Panc1 (cell line): ENCODE measurements at regions of chr5 and their contacts with region 1.

Region 1: DNA sequence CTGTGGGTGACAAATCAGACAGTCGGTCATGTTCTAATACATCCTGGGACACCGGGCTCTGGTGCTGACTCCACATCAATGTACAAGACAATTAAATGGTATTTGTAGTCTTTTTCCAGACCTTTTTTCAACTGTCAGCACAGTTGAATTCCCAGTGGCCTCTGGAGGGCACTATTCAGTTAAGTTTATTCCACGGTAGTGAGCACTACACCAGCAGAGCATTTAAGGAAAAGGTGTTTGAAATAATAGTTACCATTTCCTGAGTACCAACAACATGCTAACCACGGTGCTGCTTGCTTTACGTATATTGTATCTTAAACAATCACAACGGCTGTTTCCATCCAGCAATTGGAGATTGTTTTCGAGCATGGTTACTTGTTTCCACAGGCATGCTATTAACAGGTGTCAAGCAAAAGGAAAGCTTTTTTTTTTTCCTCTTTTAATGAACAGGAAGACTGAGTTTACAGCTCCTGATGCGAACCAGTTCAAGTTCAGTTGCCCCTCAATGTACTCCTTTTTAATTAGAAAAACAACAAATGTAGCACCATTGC is 186.7 kb downstream of the PDZD2 start:
- DNase-seq: peak; percentile 58
- ATAC-seq: peak; percentile 95
- H3K4me3 ChIP-seq: no peak overlapping the region
- H3K27ac ChIP-seq: no peak overlapping the region
- H3K4me1 ChIP-seq: no peaks in the 10 kb centered on the region
- H3K27me3 ChIP-seq: peaks cover 15% of the 10 kb centered on the region
- CTCF ChIP-seq: peak; percentile 80

Region 2: GRCh38 chr5:31492869-31493268 is 332.7 kb before region 1 on chr5:
- CTCF ChIA-PET with region 1: no interaction called
- POLR2A ChIA-PET with region 1: no interaction called
- in situ Hi-C with region 1: no loop called
- intact Hi-C with region 1: no loop called
- DNase-seq: no peak
- ATAC-seq: no peak
- H3K4me3 ChIP-seq: no peak overlapping the region
- H3K27ac ChIP-seq: no peak overlapping the region
- H3K4me1 ChIP-seq: no peaks in the 10 kb centered on the region
- H3K27me3 ChIP-seq: no peaks in the 10 kb centered on the region
- CTCF ChIP-seq: no peak

Region 3: DNA sequence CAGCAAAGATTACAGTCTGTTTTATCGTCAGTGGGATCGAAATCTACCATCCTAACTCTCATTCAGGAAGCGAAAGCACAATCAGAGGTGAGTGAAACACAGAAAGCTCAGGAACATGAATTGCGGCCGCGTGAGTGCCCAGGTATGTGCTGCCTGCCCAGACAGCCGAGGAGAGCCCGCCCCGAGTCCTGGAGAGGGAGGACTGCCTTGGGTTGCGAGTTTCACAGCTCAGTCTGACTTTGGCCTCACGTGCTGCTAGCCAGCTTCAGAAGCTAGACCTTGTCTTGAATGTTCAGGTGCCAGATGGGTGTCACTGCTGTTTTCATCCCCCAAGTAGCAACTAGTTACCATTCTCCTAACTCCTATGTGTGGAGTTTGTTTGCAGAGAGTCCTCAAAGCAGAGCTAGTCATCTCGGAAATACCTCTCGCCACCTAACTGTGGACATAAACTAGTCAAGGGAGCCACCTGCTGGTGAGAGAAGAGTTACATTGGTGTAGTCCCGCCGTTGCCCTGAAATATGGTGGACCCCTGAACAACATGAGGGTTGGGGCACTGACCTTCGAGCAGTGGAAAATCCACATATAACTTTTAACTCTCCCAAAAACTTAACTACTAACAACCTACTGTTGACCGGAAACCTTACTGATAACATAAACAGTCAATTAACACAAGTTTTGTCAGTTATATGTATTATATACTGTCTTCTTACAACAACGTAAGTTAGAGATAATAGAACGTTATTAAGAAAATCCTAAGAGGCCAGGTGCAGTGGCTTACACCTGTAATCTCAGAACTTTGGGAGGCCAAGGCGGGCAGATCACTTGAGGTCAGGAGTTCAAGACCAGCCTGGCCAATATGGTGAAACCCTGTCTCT is 267.6 kb after region 1 on chr5:
- CTCF ChIA-PET with region 1: interaction called, 4 read pairs
- POLR2A ChIA-PET with region 1: no interaction called
- in situ Hi-C with region 1: no loop called
- intact Hi-C with region 1: loop called (anchors 2 kb)
- DNase-seq: peak; percentile 61
- ATAC-seq: peak; percentile 92
- H3K4me3 ChIP-seq: no peak overlapping the region
- H3K27ac ChIP-seq: no peak overlapping the region
- H3K4me1 ChIP-seq: no peaks in the 10 kb centered on the region
- H3K27me3 ChIP-seq: no peaks in the 10 kb centered on the region
- CTCF ChIP-seq: peak; percentile 86